Activated naive CD4-positive, alpha-beta T cell treated with anti-CD3 and anti-CD28 coated beads, Interleukin-2, amount 10 ng/mL, durations not matched to agents 7 days and 5 days (primary cell): ENCODE measurements at regions of chr10 and their contacts with region 1.

Region 1: GRCh38 chr10:128211953-128212727 is 85.9 kb upstream of the MKI67 start:
- DNase-seq: peak; percentile 87
- H3K4me3 Mint-ChIP-seq: peak overlapping the region; percentile 73
- H3K27ac Mint-ChIP-seq: peak overlapping the region; percentile 86
- H3K4me1 Mint-ChIP-seq: peaks cover 27% of the 10 kb centered on the region
- H3K27me3 Mint-ChIP-seq: peaks cover 48% of the 10 kb centered on the region

Region 2: DNA sequence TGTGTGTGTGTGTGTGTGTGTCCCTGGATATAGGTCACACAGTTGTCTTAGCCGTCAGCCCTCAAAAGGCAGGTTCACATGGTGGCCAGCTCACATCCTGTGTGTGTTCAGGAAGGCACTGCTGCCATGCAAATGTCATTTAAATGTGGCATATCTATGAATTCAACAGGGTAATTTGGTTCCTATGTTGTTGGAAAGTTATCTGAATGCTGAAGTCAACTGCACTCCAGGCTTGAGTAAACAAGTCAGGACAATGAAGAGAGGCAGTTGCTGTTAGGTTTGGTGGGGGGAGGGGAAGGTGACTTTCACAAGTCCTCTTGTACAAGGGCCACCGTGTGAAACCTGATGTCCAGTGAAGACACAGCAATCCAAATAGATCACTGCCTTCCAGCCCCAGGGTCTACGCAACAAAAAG is 244.1 kb before region 1 on chr10:
- CTCF ChIA-PET with region 1: no interaction called
- DNase-seq: no peak
- H3K4me3 Mint-ChIP-seq: no peak overlapping the region
- H3K27ac Mint-ChIP-seq: no peak overlapping the region
- H3K4me1 Mint-ChIP-seq: no peaks in the 10 kb centered on the region
- H3K27me3 Mint-ChIP-seq: peaks cover 12% of the 10 kb centered on the region

Region 3: DNA sequence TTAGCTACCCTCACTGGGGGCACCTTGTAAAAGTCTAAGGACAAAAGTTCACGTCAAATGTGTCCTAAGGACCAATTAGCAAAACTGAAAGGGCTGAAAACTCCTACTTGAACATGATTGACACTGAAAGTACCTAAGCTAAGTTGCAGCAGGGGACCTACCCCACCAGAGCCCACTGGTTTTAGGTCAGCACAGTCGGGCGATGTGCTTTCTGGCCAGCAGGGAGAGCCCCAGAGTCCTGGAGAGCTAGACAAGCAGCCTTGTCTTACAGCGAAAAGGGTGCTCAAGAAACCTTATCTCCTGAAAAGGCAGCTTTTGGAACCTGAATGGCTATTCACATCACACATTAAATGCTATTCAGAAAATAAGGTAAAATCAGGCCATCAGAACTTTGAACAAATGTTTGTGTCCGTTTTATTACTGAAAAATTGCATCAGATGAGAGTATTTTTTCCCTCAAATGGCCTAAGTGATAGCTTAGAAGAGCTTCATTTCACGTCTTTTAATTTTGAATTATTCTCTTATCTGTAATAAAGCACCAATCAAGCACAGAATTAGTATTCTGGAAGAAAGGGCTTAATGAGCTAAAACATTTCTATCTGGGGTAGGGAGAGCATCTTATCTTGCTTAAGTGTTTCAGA is 33.7 kb before region 1 on chr10:
- CTCF ChIA-PET with region 1: interaction called, 47 read pairs
- DNase-seq: peak; percentile 77
- H3K4me3 Mint-ChIP-seq: no peak overlapping the region
- H3K27ac Mint-ChIP-seq: no peak overlapping the region
- H3K4me1 Mint-ChIP-seq: peaks cover 44% of the 10 kb centered on the region
- H3K27me3 Mint-ChIP-seq: peaks cover 26% of the 10 kb centered on the region

Region 4: DNA sequence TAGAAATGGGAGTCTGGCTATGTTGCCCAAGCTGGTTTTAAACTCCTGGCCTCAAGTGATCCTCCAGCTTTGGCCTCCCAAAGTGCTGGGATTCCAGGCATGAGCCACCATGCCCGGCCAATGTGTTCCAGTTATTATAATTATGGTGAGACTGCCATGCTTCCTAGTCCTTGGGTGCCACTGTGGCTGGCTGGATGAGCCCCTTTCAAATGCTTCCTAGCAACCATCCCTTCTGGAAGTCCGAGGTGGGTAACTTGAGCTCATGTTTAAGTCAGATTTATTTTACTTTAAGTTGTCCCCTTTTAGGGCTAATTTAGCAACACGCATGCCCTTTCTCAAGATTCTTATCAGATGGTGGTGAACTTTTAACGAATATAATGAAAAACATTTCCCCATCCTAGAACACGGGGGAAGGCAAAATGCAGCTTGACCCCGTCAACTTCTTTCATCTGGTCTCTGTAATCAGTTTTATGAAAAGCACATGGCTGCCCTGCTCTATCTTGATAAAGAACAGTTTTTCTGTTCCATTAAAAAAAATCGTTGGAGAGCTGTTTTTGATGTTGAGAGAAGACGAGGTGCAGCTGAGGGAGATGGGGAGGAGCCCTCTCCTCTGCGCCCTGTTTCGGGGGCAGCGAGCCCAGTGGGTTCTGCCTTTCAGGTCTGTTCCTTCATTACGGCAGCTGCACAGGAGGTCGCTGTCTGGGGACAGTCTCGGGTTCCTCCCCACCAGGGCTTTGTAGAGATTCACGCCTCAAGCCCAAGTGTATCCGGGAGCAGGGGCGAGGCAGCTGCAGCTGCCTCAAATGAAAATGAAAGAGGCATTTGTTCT is 25.0 kb before region 1 on chr10:
- CTCF ChIA-PET with region 1: interaction called, 40 read pairs
- DNase-seq: peak; percentile 68
- H3K4me3 Mint-ChIP-seq: peak overlapping the region; percentile 50
- H3K27ac Mint-ChIP-seq: peak overlapping the region; percentile 84
- H3K4me1 Mint-ChIP-seq: peaks cover 43% of the 10 kb centered on the region
- H3K27me3 Mint-ChIP-seq: peaks cover 28% of the 10 kb centered on the region